Naive thymus-derived CD4-positive, alpha-beta T cell (primary cell): ENCODE measurements at regions of chr3 and their contacts with region 1.

Region 1: DNA sequence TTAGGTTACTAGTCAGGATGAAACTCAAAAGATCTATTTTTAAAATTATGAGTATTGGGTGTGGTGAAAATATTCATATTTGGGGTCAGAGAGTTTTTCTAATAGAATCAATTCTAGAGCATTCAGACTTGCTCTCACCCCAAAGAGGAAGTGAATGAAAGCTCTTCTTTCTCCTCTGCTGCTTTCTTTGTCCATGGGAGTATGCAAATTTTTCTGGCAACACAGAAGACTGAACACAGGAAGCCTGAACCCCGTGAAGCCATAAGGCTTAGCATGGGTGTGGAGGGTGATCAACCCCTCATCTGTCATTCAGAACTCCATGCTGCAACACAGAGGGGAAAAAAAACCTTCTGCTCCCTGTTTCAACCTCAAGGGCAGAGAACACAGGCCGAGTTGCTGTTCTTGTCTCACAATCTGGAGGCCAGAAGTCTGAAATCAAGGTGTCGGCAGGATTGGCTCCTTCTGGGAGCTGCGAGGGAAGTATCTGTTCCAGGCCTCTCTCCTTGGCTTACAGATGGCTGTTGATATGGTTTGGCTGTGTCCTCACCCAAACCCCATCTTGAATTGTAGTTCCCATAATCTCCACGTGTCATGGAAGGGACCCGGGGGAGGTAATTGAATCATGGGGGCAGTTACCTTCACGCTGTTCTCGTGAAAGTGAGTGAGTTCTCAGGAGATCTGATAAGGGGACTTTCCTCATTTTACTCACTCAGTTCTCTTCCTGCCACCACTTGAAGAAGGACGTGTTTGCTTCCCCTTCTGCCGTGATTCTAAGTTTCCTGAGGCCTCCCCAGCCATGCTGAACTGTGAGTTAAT is 33.7 kb upstream of the CD47 start:
- DNase-seq: peak; percentile 33 to 88 (median 74)
- ATAC-seq: peak; percentile 79
- H3K4me3 ChIP-seq: peak overlapping the region; percentile 66
- H3K4me3 Mint-ChIP-seq: peak overlapping the region; percentile 82 to 98 (median 90)
- H3K27ac ChIP-seq: peak overlapping the region; percentile 89
- H3K27ac Mint-ChIP-seq: peak overlapping the region; percentile 92 to 99 (median 97)
- H3K4me1 ChIP-seq: peaks cover 48 to 56% of the 10 kb centered on the region in 2 donors
- H3K4me1 Mint-ChIP-seq: peaks cover 52 to 92% (median 68%) of the 10 kb centered on the region in 7 donors
- H3K27me3 ChIP-seq: no peaks in the 10 kb centered on the region
- H3K27me3 Mint-ChIP-seq: peaks cover 0 to 2% (median 0%) of the 10 kb centered on the region in 5 donors

Region 2: DNA sequence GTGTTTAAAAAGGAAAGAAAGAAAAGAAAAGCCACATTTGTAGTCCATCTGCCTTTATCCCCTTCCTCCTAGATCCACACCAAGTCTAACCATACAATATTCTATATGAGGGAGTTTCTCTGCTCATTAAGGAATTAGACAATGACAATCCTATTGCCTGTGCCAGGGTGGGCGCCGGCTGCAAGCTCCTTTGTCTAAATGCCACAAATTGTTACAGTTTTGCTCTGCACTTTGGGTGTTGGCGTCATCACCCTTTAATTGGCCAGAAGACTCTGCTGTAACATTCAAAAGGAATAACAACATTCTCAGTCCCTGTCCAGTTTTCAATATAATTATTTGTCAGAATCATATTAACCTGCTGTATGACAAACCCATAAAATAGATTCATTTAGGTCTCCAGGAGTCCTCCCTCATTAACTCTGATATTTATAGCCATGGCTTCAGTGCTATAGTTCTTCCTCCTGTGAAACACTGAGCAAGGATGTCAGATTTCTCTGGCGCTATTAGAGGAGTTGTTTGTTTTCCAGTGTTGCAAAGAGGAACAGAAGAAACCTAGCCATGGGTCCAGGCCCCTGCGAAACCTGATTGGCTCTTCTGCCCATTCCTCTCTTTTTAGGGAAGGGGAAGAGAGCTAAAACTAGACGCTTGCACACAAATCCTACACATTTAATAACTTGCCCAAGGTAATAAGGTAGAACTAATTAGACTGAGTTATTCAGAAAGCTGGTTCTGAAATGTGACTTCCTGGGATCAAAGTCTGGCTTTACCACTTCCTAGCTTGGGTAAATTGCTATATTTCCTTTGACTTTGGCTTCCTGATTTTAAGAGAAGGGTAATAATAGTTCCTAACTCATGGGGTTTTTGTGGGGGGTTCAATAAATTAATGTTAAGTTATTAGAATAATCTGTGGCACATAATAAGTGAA is 146.2 kb before region 1 on chr3:
- CTCF ChIA-PET with region 1: no interaction called
- POLR2A ChIA-PET with region 1: no interaction called
- intact Hi-C with region 1: loop called in 1 of 2 experiments (anchors 5 kb)
- DNase-seq: peak in 5 of 9 donors; percentile 18 to 35 (median 20)
- ATAC-seq: no peak
- H3K4me3 ChIP-seq: peak overlapping the region; percentile 23
- H3K4me3 Mint-ChIP-seq: peak overlapping the region; percentile 26 to 84 (median 70)
- H3K27ac ChIP-seq: no peak overlapping the region
- H3K27ac Mint-ChIP-seq: peak overlapping the region in 5 of 9 donors; percentile 19 to 76 (median 67)
- H3K4me1 ChIP-seq: peaks cover 43 to 49% of the 10 kb centered on the region in 2 donors
- H3K4me1 Mint-ChIP-seq: peaks cover 34 to 83% (median 72%) of the 10 kb centered on the region in 7 donors
- H3K27me3 ChIP-seq: no peaks in the 10 kb centered on the region
- H3K27me3 Mint-ChIP-seq: peaks cover 0 to 16% (median 0%) of the 10 kb centered on the region in 5 donors

Region 3: DNA sequence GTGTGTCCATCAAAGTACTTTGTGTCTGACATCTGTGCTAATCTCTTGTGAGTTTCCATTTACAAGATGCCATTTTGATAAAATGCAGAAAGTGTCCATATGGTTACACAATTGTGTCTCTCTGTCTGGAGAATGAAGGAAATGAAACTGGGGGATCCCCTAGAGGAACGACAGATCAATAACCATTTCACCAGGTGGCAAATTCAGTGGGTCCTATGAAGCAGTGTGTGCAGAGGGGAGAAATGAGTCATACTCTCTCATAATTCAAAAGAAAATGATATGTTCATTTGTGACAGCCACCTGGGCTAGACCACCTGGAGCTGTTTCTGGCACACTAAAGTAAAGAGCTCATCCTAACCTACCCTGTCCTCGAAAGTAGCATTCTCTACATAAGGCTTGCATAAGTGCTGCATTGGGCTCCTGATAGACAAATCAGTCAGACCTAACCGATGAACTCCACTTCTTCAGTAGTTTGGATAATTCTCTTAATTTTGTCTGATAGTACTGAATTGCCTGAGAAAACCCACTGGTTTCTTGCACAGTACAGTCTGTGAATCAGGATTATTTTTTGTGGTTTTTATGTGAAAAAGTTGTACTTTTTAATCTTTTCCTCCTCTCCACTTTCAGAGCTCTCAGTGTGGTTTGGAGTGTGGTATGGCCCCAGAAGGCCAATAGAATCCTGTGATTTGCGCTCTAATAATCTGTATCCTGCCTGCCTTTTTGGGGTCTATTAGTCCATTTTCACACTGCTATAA is 23.5 kb before region 1 on chr3:
- CTCF ChIA-PET with region 1: interaction called, 6 read pairs
- POLR2A ChIA-PET with region 1: interaction called, 393 read pairs
- intact Hi-C with region 1: loop called (anchors 1 kb)
- DNase-seq: peak in 2 of 9 donors; percentile 27 to 74
- ATAC-seq: peak; percentile 72
- H3K4me3 ChIP-seq: no peak overlapping the region
- H3K4me3 Mint-ChIP-seq: peak overlapping the region in 9 of 10 donors; percentile 15 to 79 (median 49)
- H3K27ac ChIP-seq: peak overlapping the region; percentile 49
- H3K27ac Mint-ChIP-seq: peak overlapping the region; percentile 21 to 85 (median 80)
- H3K4me1 ChIP-seq: peaks cover 16 to 33% of the 10 kb centered on the region in 2 donors
- H3K4me1 Mint-ChIP-seq: peaks cover 28 to 77% (median 64%) of the 10 kb centered on the region in 7 donors
- H3K27me3 ChIP-seq: no peaks in the 10 kb centered on the region
- H3K27me3 Mint-ChIP-seq: peaks cover 0 to 22% (median 0%) of the 10 kb centered on the region in 5 donors

Region 4: GRCh38 chr3:108292905-108293328 is 168.4 kb after region 1 on chr3:
- CTCF ChIA-PET with region 1: no interaction called
- POLR2A ChIA-PET with region 1: interaction called, 4 read pairs
- intact Hi-C with region 1: loop called in 1 of 2 experiments (anchors 2 kb)
- DNase-seq: peak in 5 of 9 donors; percentile 26 to 45 (median 33)
- ATAC-seq: peak; percentile 73
- H3K4me3 ChIP-seq: no peak overlapping the region
- H3K4me3 Mint-ChIP-seq: peak overlapping the region in 8 of 10 donors; percentile 0 to 78 (median 37)
- H3K27ac ChIP-seq: peak overlapping the region; percentile 22
- H3K27ac Mint-ChIP-seq: peak overlapping the region in 8 of 9 donors; percentile 7 to 86 (median 60)
- H3K4me1 ChIP-seq: peaks cover 17 to 19% of the 10 kb centered on the region in 2 donors
- H3K4me1 Mint-ChIP-seq: peaks cover 23 to 62% (median 31%) of the 10 kb centered on the region in 7 donors
- H3K27me3 ChIP-seq: no peaks in the 10 kb centered on the region
- H3K27me3 Mint-ChIP-seq: no peaks in the 10 kb centered on the region

Region 5: GRCh38 chr3:108505811-108506210 is 381.3 kb after region 1 on chr3:
- CTCF ChIA-PET with region 1: no interaction called
- POLR2A ChIA-PET with region 1: no interaction called
- intact Hi-C with region 1: no loop called
- DNase-seq: no peak
- ATAC-seq: peak; percentile 44
- H3K4me3 ChIP-seq: no peak overlapping the region
- H3K4me3 Mint-ChIP-seq: no peak overlapping the region
- H3K27ac ChIP-seq: no peak overlapping the region
- H3K27ac Mint-ChIP-seq: no peak overlapping the region
- H3K4me1 ChIP-seq: no peaks in the 10 kb centered on the region
- H3K4me1 Mint-ChIP-seq: no peaks in the 10 kb centered on the region
- H3K27me3 ChIP-seq: no peaks in the 10 kb centered on the region
- H3K27me3 Mint-ChIP-seq: peaks cover 0 to 8% (median 4%) of the 10 kb centered on the region in 5 donors

Region 6: GRCh38 chr3:108602249-108602934 is 477.8 kb after region 1 on chr3:
- CTCF ChIA-PET with region 1: interaction called, 3 read pairs
- POLR2A ChIA-PET with region 1: interaction called, 3 read pairs
- intact Hi-C with region 1: loop called (anchors 5 to 10 kb)
- DNase-seq: peak in 7 of 9 donors; percentile 34 to 74 (median 57)
- ATAC-seq: peak; percentile 92
- H3K4me3 ChIP-seq: peak overlapping the region; percentile 22
- H3K4me3 Mint-ChIP-seq: peak overlapping the region; percentile 25 to 81 (median 74)
- H3K27ac ChIP-seq: peak overlapping the region; percentile 69
- H3K27ac Mint-ChIP-seq: peak overlapping the region; percentile 76 to 97 (median 93)
- H3K4me1 ChIP-seq: peaks cover 38 to 46% of the 10 kb centered on the region in 2 donors
- H3K4me1 Mint-ChIP-seq: peaks cover 27 to 64% (median 54%) of the 10 kb centered on the region in 7 donors
- H3K27me3 ChIP-seq: no peaks in the 10 kb centered on the region
- H3K27me3 Mint-ChIP-seq: no peaks in the 10 kb centered on the region